IMR-90 (cell line): ENCODE measurements at regions of chr1 and their contacts with region 1.

Region 1: GRCh38 chr1:100037927-100038659 is 68.3 kb downstream of the SLC35A3 start:
- DNase-seq: peak; percentile 83
- ATAC-seq: peak; percentile 95
- H3K4me3 ChIP-seq: peak overlapping the region; percentile 99
- H3K27ac ChIP-seq: peak overlapping the region; percentile 99
- H3K4me1 ChIP-seq: no peaks in the 10 kb centered on the region
- H3K27me3 ChIP-seq: no peaks in the 10 kb centered on the region
- CTCF ChIP-seq: no peak
- POLR2A ChIP-seq: peak; percentile 95
- RAD21 ChIP-seq: no peak

Region 2: DNA sequence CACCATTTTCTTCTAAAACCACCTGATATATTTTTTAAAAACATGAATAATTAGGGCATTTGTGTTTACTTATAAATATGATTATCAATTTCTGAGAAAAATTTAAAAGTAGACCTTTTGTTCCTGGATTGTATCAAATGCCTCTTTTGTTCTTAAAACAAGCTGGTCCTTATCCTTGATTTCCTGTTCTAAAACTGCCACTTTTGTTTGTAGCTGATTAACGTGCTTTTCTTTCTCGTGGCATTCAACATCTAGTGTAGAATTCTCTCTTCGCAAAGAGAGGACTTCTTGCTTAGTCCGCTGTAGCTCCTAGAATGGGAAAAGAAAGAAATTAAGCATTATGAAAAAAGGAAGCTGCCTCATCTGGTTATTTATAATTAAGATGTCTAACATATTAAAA is 69.6 kb after region 1 on chr1:
- CTCF ChIA-PET with region 1: no interaction called
- POLR2A ChIA-PET with region 1: no interaction called
- dilution Hi-C with region 1: no loop called
- in situ Hi-C with region 1: no loop called
- intact Hi-C with region 1: no loop called
- DNase-seq: no peak
- ATAC-seq: no peak
- H3K4me3 ChIP-seq: no peak overlapping the region
- H3K27ac ChIP-seq: no peak overlapping the region
- H3K4me1 ChIP-seq: peaks cover 1% of the 10 kb centered on the region; the same call in 1 of the 2 replicates
- H3K27me3 ChIP-seq: no peaks in the 10 kb centered on the region
- CTCF ChIP-seq: no peak
- POLR2A ChIP-seq: no peak
- RAD21 ChIP-seq: no peak

Region 3: DNA sequence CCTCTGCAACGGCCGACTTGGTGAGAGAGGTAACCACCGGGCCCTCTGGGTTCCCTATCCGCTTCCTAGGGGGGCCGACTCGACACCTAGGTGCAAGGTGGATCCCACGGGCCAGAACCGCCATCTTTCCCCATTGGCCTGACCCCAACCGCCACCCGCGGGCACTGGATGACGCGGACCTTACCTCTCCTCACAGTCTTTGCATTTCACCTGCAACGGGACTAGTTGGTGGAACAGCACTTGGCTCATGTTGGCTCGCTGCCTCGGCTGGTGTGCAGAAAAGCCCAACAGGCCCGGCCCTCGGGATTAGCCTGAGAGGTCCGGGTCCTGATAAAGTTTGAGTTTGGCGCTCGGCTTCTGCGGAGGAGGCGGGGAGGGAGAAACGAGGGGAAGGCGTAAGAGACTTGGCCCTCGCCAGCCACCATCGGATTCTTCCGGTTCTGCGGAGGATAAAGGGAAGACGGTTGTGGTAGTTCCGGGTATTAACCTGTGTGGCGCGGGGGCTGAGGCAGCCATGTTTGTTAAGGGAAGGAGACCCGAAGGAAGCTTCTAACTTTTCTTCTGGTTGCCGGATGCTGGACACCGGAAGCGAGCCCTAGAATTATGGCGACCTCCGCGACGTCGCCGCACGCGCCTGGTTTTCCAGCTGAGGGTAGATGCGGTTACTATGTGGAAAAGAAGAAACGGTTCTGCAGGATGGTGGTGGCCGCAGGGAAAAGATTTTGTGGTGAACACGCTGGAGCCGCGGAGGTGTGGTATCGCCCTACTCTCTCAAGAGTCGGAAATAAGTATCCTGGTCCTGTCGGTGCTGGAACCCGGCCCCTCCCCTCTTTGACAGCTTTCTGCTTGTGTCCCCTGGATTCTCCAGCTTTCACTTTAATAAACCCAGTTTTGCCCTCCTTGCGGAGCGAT is 94.7 kb after region 1 on chr1 and contains the starts of genes SASS6 and TRMT13:
- CTCF ChIA-PET with region 1: no interaction called
- POLR2A ChIA-PET with region 1: no interaction called
- dilution Hi-C with region 1: no loop called
- in situ Hi-C with region 1: no loop called
- intact Hi-C with region 1: loop called (anchors 1 kb)
- DNase-seq: peak; percentile 99
- ATAC-seq: peak; percentile 99
- H3K4me3 ChIP-seq: peak within 1 kb of the TSS; percentile 72
- H3K27ac ChIP-seq: peak within 1 kb of the TSS; percentile 71
- H3K4me1 ChIP-seq: peaks cover 1% of the 10 kb centered on the region; the same call in 1 of the 2 replicates
- H3K27me3 ChIP-seq: no peaks in the 10 kb centered on the region
- CTCF ChIP-seq: no peak
- POLR2A ChIP-seq: peak; percentile 45; the same call in 1 of the 2 replicates
- RAD21 ChIP-seq: no peak
- total RNA-seq, gene SASS6: 2.7 and 5.0 TPM in 2 replicates
- total RNA-seq, gene TRMT13: 5.2 and 12.8 TPM in 2 replicates

Region 4: DNA sequence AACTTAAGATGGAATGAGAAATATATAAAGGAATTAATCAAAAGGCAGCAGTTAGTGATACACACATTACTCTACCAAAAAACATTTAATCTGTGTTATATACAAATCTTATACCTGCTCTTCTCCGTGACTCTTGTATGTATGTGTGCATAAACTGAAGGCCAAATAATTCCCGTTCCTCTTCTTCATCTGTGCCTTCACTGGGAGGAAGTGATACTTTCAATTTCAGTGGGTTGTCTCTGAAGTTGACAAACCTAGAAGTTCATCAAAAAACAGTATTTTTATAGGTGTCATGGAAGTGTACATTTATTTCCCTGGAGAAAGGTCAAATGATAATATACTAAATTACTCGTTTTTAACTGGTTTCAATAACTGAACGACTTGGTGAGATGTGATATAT is 114.2 kb after region 1 on chr1:
- CTCF ChIA-PET with region 1: no interaction called
- POLR2A ChIA-PET with region 1: no interaction called
- dilution Hi-C with region 1: no loop called
- in situ Hi-C with region 1: no loop called
- intact Hi-C with region 1: no loop called
- DNase-seq: no peak
- ATAC-seq: no peak
- H3K4me3 ChIP-seq: no peak overlapping the region
- H3K27ac ChIP-seq: no peak overlapping the region
- H3K4me1 ChIP-seq: no peaks in the 10 kb centered on the region
- H3K27me3 ChIP-seq: no peaks in the 10 kb centered on the region
- CTCF ChIP-seq: no peak
- POLR2A ChIP-seq: no peak
- RAD21 ChIP-seq: no peak